ENCODE measurements at regions of chr1 and their contacts with region 1.

Region 1: GRCh38 chr1:228405987-228406265 is 709 bp downstream of the TRIM11 start:
- DNase-seq: peak; percentile 40
- H3K4me3 Mint-ChIP-seq: peak overlapping the region; percentile 95
- H3K27ac Mint-ChIP-seq: peak overlapping the region; percentile 93
- H3K4me1 Mint-ChIP-seq: peaks cover 55% of the 10 kb centered on the region
- H3K27me3 Mint-ChIP-seq: no peaks in the 10 kb centered on the region
- CTCF ChIP-seq: no peak

Region 2: GRCh38 chr1:228165372-228166169 is 240.4 kb before region 1 on chr1 and contains the start of gene IBA57:
- CTCF ChIA-PET with region 1: interaction called, 3 read pairs
- POLR2A ChIA-PET with region 1: interaction called, 31 read pairs
- intact Hi-C with region 1: no loop called
- DNase-seq: peak; percentile 100
- H3K4me3 Mint-ChIP-seq: peak within 1 kb of the TSS; percentile 70
- H3K27ac Mint-ChIP-seq: peak within 1 kb of the TSS; percentile 86
- H3K4me1 Mint-ChIP-seq: peaks cover 46% of the 10 kb centered on the region
- H3K27me3 Mint-ChIP-seq: no peaks in the 10 kb centered on the region
- CTCF ChIP-seq: peak; percentile 99
- total RNA-seq, gene IBA57: 12.0 and 16.5 TPM in 2 replicates

Region 3: DNA sequence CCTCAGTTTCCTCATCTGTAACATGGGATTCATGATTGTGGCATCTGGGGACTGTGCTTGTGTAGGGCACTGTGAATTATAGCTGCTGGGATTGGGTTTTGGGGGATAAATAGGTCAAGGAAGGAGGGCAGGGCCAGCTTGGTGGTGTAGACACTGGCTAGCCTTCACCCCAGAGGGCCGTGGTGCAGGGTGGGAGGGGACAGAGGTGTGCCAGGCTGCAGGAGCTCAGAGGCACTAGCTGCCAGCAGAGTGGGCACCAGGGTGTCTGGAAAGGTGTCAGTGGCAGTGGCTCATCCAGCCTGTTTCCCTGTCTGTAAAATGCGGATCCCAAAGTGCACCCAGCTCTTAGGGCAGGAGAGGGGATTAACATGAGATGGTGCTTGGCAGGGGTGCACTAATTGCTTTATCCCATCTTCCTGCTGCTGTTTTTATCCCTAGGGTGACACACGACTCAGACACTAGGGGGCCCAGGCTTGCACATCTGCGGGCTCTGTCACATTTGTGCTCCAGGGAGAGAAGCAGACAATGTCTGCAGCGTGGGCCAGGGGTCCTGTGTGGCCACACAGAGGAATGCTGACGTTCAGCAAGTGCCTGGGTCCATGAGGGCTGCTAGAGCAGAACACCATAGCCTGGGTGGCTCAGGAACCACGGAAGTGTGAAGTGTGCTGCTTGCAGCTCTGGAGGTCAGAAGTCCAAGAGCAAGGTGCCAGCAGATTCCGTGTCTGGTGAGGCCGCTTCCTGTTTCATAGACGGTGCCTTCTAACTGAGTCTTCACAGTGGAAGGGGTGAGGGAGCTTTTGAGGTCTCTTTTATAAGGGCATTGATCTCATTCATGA is 178.8 kb before region 1 on chr1:
- CTCF ChIA-PET with region 1: interaction called, 5 read pairs
- POLR2A ChIA-PET with region 1: interaction called, 13 read pairs
- intact Hi-C with region 1: no loop called
- DNase-seq: peak; percentile 42
- H3K4me3 Mint-ChIP-seq: no peak overlapping the region
- H3K27ac Mint-ChIP-seq: peak overlapping the region; percentile 93
- H3K4me1 Mint-ChIP-seq: peaks cover 15% of the 10 kb centered on the region
- H3K27me3 Mint-ChIP-seq: no peaks in the 10 kb centered on the region
- CTCF ChIP-seq: peak; percentile 31

Region 4: DNA sequence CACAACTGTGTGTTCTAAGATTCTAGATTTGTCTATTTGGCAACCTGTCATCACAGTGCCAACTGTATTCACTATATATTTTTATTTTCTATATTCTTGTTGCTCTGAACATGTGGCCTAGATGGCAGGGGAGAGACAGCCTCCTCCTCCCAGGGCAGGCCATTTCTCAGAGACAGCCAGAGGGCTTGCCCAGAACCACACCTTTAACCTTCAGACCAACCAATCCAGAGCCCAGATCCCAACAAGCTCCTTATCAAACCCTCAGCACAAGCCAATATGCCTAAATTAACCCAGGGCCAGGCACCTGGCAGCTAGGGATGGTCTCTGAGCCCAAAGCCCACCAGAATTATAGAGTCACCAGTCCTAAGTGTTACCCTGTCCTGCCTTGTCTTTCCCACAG is 18.6 kb before region 1 on chr1:
- CTCF ChIA-PET with region 1: interaction called, 4 read pairs
- POLR2A ChIA-PET with region 1: interaction called, 41 read pairs
- intact Hi-C with region 1: no loop called
- DNase-seq: no peak
- H3K4me3 Mint-ChIP-seq: no peak overlapping the region
- H3K27ac Mint-ChIP-seq: no peak overlapping the region
- H3K4me1 Mint-ChIP-seq: peaks cover 3% of the 10 kb centered on the region
- H3K27me3 Mint-ChIP-seq: peaks cover 16% of the 10 kb centered on the region
- CTCF ChIP-seq: no peak

Region 5: DNA sequence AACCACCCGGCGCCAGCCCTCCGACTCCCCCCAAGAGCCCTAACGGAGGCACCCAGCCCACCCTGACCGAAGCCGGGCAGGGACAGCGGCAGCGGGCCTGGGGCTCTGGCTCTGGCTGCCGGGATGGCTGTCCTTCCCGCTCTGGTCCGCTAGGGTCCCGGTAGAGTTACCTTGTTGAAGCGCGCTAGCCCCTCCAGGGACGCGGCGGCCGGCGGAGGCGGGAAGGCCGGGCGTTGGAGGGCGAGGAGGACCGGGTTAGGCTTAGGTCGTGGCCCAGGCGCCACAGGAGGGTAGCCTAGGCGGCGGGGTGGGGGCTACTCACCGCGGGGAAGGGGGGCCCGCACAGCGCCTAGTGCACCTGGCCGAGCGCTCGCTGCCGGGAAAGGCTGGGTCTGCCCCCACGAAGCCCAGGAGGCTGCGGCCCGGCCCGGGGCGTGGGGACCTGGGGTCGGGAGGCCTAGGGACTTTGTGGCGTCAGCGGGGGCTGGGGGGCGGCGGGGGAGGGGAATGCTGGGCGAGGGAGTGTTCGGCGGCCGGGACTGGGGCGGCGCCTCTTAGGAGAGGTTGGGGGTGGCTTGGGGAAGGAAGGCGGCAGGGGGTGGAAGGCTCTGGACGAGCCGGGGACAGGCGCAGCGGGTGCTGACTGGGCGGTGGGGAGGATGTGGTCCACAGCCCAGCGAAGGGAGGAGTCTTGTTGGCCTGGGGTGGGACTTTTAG is 10.4 kb after region 1 on chr1 and contains the start of gene TRIM17:
- CTCF ChIA-PET with region 1: no interaction called
- POLR2A ChIA-PET with region 1: interaction called, 38 read pairs
- intact Hi-C with region 1: no loop called
- DNase-seq: no peak
- H3K4me3 Mint-ChIP-seq: no peak within 1 kb of the TSS
- H3K27ac Mint-ChIP-seq: no peak within 1 kb of the TSS
- H3K4me1 Mint-ChIP-seq: no peaks in the 10 kb centered on the region
- H3K27me3 Mint-ChIP-seq: no peaks in the 10 kb centered on the region
- CTCF ChIP-seq: no peak
- total RNA-seq, gene TRIM17: not detected in 2 replicates